CD4-positive, alpha-beta T cell (primary cell): ENCODE measurements at regions of chr3 and their contacts with region 1.

Region 1: GRCh38 chr3:152524198-152525140 is 255.7 kb downstream of the MBNL1 start:
- DNase-seq: peak in 12 of 14 experiments; percentile 7 to 69 (median 30)
- ATAC-seq: peak; percentile 48
- H3K4me3 ChIP-seq: no peak overlapping the region
- H3K4me3 Mint-ChIP-seq: no peak overlapping the region
- H3K27ac ChIP-seq: no peak overlapping the region
- H3K27ac Mint-ChIP-seq: no peak overlapping the region
- H3K4me1 ChIP-seq: no peaks in the 10 kb centered on the region
- H3K4me1 Mint-ChIP-seq: no peaks in the 10 kb centered on the region
- H3K27me3 ChIP-seq: no peaks in the 10 kb centered on the region
- H3K27me3 Mint-ChIP-seq: no peaks in the 10 kb centered on the region
- CTCF ChIP-seq: peak; percentile 97

Region 2: DNA sequence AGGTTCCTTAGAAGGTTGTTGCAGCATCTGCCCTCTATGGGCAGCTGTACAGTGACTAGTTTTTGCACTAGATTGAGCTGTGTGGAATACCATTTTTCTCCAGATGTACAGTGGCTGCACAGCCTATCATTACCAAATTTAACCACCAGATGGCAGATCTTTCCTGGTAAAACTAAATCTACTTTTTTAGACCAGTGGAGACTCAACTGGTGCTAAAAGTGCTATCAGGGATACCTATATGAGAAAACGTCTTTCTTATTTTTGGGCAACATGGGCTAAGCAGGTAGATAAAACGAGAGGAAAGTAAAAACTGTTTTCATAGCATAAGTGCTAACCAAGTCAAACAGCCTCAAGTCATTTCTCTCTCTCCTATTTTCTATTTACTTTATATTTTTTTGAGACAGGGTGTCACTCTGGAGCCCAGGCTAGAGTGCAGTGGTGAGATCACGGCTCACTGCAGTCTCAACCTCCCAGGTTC is 1084.8 kb before region 1 on chr3:
- CTCF ChIA-PET with region 1: no interaction called
- POLR2A ChIA-PET with region 1: no interaction called
- intact Hi-C with region 1: loop called (anchors 1 to 2 kb)
- DNase-seq: peak in 4 of 14 experiments; percentile 4 to 58 (median 44)
- ATAC-seq: peak; percentile 46
- H3K4me3 ChIP-seq: no peak overlapping the region
- H3K4me3 Mint-ChIP-seq: no peak overlapping the region
- H3K27ac ChIP-seq: no peak overlapping the region
- H3K27ac Mint-ChIP-seq: no peak overlapping the region
- H3K4me1 ChIP-seq: no peaks in the 10 kb centered on the region
- H3K4me1 Mint-ChIP-seq: no peaks in the 10 kb centered on the region
- H3K27me3 ChIP-seq: no peaks in the 10 kb centered on the region
- H3K27me3 Mint-ChIP-seq: peaks cover 4% of the 10 kb centered on the region
- CTCF ChIP-seq: peak; percentile 73

Region 3: GRCh38 chr3:151468284-151468917 is 1056.1 kb before region 1 on chr3:
- CTCF ChIA-PET with region 1: no interaction called
- POLR2A ChIA-PET with region 1: no interaction called
- intact Hi-C with region 1: loop called (anchors 2 to 5 kb)
- DNase-seq: peak in 10 of 14 experiments; percentile 7 to 71 (median 14)
- ATAC-seq: no peak
- H3K4me3 ChIP-seq: no peak overlapping the region
- H3K4me3 Mint-ChIP-seq: no peak overlapping the region
- H3K27ac ChIP-seq: no peak overlapping the region
- H3K27ac Mint-ChIP-seq: no peak overlapping the region
- H3K4me1 ChIP-seq: no peaks in the 10 kb centered on the region
- H3K4me1 Mint-ChIP-seq: no peaks in the 10 kb centered on the region
- H3K27me3 ChIP-seq: no peaks in the 10 kb centered on the region
- H3K27me3 Mint-ChIP-seq: peaks cover 9% of the 10 kb centered on the region
- CTCF ChIP-seq: peak; percentile 81

Region 4: DNA sequence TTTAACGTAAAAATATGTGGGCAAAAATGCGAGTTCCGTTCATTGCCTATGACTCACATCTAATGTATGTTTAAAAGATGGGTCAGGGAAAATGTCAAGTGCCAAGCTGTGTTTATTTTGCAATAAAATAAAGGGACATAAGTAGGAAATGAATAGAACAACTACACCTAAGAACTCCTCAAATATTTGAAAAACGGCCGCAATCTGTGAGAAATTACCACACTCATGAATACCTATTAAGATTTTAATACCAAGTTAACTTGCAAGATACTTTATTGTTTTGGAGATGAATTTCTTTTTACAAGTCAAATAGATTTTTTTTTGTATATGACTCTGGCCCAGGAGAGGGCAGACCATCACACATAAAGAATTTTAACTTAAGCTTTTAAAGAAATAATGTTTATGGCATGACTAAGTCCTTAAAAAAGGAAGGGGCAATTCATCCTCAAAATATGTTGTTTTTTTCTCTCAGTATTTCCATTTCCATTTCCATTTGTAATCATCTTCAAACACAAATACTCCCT is 498.4 kb before region 1 on chr3:
- CTCF ChIA-PET with region 1: no interaction called
- POLR2A ChIA-PET with region 1: no interaction called
- intact Hi-C with region 1: loop called in 1 of 2 experiments (anchors 5 kb)
- DNase-seq: peak in 3 of 14 experiments; percentile 13 to 23 (median 22)
- ATAC-seq: no peak
- H3K4me3 ChIP-seq: no peak overlapping the region
- H3K4me3 Mint-ChIP-seq: no peak overlapping the region
- H3K27ac ChIP-seq: no peak overlapping the region
- H3K27ac Mint-ChIP-seq: no peak overlapping the region
- H3K4me1 ChIP-seq: no peaks in the 10 kb centered on the region
- H3K4me1 Mint-ChIP-seq: no peaks in the 10 kb centered on the region
- H3K27me3 ChIP-seq: no peaks in the 10 kb centered on the region
- H3K27me3 Mint-ChIP-seq: no peaks in the 10 kb centered on the region
- CTCF ChIP-seq: no peak

Region 5: DNA sequence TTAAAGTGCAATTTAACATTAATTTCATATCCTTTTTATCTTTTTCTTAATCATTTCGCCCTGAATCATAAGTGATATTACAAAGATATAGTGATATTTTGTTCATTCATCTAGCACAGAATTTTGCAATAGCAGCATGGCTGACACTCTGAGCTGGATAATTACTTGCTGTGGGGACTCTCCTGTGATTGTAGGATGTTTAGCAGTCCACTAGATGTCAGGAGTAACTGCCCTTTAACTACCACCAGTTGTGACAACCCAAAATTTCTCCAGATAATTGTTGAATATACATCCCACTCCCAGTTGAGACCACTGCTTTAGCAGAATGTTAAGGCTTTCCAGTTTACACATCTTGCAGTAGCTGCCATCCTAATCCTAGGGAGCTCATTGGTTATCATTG is 452.5 kb before region 1 on chr3:
- CTCF ChIA-PET with region 1: no interaction called
- POLR2A ChIA-PET with region 1: no interaction called
- intact Hi-C with region 1: loop called (anchors 1 to 5 kb)
- DNase-seq: peak in 4 of 14 experiments; percentile 2 to 65 (median 56)
- ATAC-seq: peak; percentile 86
- H3K4me3 ChIP-seq: no peak overlapping the region
- H3K4me3 Mint-ChIP-seq: no peak overlapping the region
- H3K27ac ChIP-seq: no peak overlapping the region
- H3K27ac Mint-ChIP-seq: no peak overlapping the region
- H3K4me1 ChIP-seq: no peaks in the 10 kb centered on the region
- H3K4me1 Mint-ChIP-seq: peaks cover 5% of the 10 kb centered on the region
- H3K27me3 ChIP-seq: no peaks in the 10 kb centered on the region
- H3K27me3 Mint-ChIP-seq: no peaks in the 10 kb centered on the region
- CTCF ChIP-seq: peak; percentile 45

Region 6: DNA sequence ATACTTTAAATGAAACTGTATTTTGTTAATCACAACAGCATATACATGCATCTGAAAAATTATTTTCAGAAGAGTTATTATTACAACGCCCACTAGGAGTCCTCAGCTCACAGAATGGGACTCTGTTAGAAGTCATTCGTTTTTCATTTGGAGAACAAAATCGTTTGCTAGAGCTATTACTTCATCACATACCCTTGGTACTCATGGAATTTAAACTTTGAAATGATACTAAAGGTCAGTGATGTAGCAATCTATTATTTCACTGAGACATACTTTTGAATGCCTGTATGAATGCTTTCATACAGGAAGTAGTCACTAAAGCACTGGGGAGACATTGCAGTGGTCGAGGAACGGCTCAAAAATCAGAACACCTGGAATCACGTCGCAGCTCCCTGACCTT is 57.7 kb before region 1 on chr3:
- CTCF ChIA-PET with region 1: no interaction called
- POLR2A ChIA-PET with region 1: interaction called, 3 read pairs
- intact Hi-C with region 1: loop called in 1 of 2 experiments (anchors 2 kb)
- DNase-seq: peak in 3 of 14 experiments; percentile 44 to 56 (median 55)
- ATAC-seq: peak; percentile 82
- H3K4me3 ChIP-seq: no peak overlapping the region
- H3K4me3 Mint-ChIP-seq: no peak overlapping the region
- H3K27ac ChIP-seq: no peak overlapping the region
- H3K27ac Mint-ChIP-seq: peak overlapping the region; percentile 81
- H3K4me1 ChIP-seq: peaks cover 3% of the 10 kb centered on the region
- H3K4me1 Mint-ChIP-seq: peaks cover 18% of the 10 kb centered on the region
- H3K27me3 ChIP-seq: no peaks in the 10 kb centered on the region
- H3K27me3 Mint-ChIP-seq: no peaks in the 10 kb centered on the region
- CTCF ChIP-seq: peak; percentile 65